GM10248 (cell line): ENCODE measurements at regions of chr4 and their contacts with region 1.

Region 1: DNA sequence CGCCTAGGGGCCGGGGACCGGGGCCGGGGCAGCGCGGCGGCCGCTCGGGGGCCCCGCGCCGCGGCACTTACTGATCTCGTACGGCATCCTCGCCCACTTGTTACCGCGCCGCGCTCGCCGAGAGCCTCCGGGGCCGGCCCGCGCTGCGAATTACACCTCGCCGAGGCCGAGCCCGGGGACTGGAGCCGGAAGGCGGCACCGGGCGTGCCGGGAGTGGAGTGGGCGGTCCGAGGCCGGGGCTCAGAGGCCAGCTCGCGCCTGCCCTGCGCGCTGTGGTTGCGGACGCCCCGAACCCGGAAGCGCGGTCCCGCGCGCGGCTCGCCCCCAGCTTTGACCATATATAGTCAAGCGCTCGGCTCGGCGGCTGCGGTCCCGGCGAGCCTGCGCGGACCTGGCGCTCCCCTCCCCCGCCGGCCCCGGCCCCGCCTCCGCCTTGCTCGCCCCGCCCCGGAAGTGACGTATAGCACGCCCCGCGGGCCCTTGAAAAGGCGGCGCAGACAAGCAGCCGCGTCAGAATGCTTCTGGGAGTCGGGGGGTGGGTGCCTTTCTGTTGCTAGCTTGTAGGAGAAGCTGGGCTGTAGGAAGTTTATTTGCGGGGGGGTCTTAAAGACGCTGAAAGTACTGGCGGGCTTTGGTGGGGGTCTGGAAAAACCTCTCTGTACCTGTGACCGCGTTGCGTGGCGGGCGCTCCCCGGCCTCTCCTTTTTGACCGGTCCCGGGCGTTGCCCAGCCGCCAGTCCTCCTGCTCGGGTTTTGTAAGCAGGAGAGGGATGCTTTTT is at the start of gene WDR1:
- DNase-seq: peak; percentile 95
- CTCF ChIP-seq: no peak

Region 2: DNA sequence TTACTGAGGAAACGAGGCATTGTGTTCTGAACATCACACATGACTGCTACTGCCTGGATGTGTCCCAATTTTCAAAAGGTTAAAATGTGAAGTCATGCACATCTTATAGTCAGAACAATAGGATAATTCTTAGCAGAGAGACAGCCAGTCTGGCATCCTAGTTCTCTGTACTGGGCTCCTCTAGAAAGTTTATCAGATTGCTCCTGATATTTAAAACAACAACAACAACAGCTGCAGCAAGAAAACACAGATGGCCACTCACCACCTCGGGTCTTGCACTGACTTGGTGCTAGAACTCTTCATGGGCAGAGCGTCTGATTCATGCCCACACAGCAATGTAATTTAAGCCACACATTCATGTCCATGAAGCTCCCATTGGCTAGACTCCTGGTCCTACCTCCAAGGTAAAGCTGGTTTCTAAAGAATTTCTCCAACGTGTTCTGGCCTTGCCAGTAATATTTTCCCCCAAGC is 62.2 kb before region 1 on chr4:
- CTCF ChIA-PET with region 1: no interaction called
- POLR2A ChIA-PET with region 1: no interaction called
- DNase-seq: no peak
- CTCF ChIP-seq: no peak

Region 3: DNA sequence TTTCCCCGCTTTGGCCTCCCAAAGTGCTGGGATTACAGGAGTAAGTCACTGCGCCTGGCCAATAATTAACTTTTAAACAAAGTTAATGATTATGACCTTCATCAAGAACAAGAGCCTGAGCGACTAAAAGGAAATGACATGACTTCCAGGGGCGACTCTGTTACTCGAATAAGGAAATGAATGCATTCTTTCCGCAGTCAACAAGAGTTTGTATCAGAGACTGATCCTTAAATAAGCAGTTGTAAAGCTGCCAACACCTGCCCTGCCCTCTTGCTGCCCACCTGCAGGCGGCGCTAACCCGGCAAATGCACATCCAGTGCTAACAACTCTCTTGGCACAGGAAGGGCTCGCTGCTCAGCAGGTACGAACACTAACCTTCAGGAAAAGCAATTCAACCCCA is 27.4 kb before region 1 on chr4:
- CTCF ChIA-PET with region 1: interaction called, 3 read pairs
- POLR2A ChIA-PET with region 1: interaction called, 63 read pairs
- DNase-seq: no peak
- CTCF ChIP-seq: peak; percentile 19

Region 4: GRCh38 chr4:10106421-10107039 is 10.2 kb before region 1 on chr4:
- CTCF ChIA-PET with region 1: interaction called, 4 read pairs
- POLR2A ChIA-PET with region 1: interaction called, 69 read pairs
- DNase-seq: no peak
- CTCF ChIP-seq: no peak

Region 5: DNA sequence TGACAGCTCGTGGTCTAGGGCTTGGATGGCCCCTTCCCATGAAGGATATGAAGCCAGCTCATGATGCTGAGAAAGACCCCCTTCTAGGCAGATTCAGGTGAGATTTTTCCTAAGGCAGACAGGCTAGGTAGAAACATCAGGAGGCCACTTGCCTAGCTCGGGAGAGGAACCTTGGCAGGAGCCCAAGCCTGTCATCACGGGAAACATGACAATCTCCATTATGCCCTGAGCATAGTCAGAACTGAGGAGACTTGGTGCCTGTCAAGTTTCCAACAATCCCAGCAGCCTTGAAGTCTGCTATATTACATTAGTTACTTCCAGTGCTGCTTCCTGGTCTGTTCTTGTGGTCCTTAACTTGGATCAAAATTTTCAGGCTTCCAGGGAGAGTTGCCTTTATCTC is 18.5 kb after region 1 on chr4:
- CTCF ChIA-PET with region 1: interaction called, 22 read pairs
- POLR2A ChIA-PET with region 1: interaction called, 10 read pairs
- DNase-seq: no peak
- CTCF ChIP-seq: no peak

Region 6: DNA sequence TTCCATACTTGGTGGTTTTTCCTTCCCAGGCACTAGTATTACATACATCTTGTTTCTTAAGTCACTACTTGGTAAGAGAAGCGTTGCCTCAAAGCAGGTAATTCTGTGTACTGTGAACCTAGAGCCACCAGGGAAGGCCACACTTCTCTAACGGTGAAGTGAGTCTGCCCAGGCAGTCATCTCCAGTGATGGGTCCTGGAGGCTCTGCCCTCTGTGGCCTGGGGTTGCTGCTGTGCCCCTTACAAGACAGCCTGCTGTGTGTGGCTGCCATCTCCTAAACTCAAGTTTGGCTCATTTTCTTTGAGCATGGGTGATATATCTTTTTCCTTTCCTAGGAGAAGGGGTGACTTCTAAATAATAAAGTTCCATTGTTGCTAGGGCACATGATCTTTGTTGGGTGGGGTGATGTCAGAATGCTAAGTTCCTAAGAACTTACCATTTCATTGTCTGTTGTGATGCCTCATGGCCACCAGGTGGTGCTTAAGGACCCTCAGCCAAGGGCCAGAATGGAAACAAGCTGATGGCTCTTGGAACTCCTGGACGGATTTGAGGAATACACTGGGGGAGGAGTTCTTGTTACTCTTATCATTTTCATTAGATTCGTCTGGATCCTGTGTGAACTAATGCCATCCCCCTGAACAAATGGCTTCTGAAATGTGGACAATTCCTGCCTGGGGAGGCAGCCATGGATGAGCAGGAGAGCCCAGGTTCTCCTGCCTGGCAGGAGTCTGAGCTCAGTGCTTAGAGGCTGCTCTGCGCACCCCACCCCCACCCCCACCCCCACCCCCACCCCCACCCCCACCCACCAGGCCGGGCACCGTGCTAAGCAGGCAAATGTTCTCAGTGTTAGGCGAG is 40.9 kb after region 1 on chr4:
- CTCF ChIA-PET with region 1: interaction called, 15 read pairs
- POLR2A ChIA-PET with region 1: interaction called, 7 read pairs
- DNase-seq: peak; percentile 76
- CTCF ChIP-seq: peak; percentile 75